Posterior vena cava (tissue), 2 donors: ENCODE measurements at regions of chr17 and their contacts with region 1.

Region 1: DNA sequence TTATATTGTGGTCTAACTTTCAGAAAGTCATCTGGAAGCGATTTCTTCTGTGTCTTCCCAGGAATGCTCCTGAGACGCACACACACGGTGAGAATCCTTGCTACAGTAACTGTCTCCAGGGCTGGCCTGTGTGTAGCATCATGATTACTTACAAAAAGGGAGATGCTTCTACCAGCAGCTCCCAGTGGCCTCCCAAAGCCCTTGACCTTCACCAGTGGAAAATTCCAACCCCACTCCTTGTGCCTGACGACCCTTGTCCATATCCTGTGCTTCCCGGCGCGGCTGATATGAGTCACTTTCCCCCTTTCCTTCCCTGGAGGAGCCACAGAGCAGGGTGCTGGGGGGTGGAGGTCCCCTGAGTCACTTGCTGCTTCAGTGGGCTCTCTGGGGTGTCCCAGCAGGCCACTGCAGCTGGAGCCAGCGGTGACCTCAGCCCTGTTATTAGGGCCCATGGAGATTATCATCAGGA is 22.1 kb upstream of the NAT9 start:
- DNase-seq: no peak

Region 2: GRCh38 chr17:73815474-73815873 is 982.8 kb before region 1 on chr17:
- intact Hi-C with region 1: loop called in 1 of 2 experiments (anchors 5 kb)
- DNase-seq: no peak

Region 3: DNA sequence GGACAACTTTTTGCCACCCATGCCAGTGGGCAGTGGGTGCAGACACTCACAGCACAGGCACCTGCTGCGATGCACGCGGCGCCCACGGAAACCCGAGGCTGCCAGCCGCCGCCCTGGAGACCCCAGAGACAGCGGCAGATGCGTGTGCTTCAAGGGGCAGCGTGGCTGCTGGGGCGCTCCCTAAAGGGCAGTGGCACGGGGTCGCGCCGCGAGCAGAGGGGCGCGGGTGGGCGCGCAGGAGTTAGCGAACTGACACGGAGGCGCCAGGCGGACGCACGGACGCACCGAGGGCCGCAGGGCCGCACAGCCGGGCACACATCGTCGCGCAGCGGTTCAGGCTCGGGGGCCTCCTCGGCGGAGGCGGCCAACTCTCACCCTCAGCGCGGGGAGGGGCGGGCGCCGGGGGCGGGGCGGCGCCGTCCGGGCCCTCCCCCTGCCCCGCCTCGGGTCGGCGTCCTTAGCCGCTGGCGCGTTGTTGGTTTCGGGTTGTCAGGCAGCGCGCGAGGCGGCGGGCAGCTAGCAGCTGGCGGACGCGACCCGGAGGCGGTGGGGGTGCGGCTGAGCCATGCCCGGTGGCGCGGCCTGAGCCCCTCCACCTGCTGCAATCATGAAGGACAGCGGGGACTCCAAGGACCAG is 472.4 kb before region 1 on chr17 and contains the start of gene KIF19:
- intact Hi-C with region 1: no loop called
- DNase-seq: no peak
- total RNA-seq, gene KIF19: 1.4 to 2.3 TPM

Region 4: DNA sequence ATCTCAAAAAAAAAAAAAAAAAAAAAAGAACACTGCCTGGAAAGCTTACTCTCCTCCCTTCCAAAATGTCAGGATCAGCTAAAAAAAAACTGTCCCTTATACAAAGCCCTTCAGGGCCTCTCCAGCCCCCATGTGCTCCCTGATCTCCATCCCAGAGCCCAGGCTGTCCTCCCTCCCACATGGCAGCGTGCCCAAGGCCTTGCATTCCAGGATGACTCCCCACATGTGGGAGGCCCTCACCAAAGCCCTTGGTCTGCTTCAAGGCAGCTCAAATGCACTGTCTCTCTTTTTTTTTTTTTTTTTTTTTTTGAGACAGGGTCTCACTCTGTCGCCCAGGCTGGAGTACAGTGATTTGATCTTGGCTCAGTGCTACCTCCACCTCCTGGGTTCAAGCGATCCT is 72.2 kb after region 1 on chr17:
- intact Hi-C with region 1: no loop called
- DNase-seq: no peak